ENCODE measurements at regions of chr12 and their contacts with region 1.

Region 1: DNA sequence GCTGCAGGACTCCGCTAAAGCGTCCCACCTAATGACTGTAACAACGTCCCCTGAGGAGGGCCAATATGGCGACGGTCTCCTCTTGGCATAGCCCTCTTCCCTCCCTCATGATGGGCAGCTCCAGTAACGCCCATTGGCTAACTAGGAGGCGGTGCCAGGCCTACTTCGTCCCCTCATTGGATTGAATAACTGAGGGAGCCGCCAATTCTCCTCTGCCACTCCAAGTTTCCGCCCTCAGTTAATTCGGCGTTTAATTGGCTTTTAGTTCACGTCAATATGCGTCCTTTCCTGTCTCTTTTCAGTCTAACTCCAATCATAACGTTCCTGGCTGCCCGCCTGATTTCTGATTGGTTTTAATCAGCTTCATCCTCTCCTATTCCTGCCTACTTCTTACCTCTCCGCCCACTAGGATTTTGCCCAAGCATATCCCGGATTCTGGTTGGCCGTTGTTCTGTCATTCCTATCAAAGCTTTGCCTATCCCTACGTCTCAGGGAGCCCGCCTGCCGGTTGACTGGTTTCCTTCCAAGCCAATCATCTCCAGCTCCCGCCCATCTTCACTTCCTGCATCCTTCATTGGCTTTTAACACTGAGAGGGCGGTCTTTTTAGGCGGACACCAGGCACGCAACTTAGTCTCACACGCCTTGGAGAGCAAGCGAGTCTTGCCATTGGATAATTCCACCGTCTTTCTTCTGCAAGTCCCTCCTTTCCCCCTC is 430 bp upstream of the SP1 start:
- DNase-seq: peak in 4 of 5 donors; percentile 83 to 100 (median 99)
- H3K4me3 ChIP-seq: peak overlapping the region; percentile 63
- H3K4me3 Mint-ChIP-seq: no peak overlapping the region
- H3K27ac ChIP-seq: peak overlapping the region; percentile 73
- H3K27ac Mint-ChIP-seq: no peak overlapping the region
- H3K4me1 ChIP-seq: peaks cover 42% of the 10 kb centered on the region
- H3K4me1 Mint-ChIP-seq: peaks cover 30 to 37% (median 36%) of the 10 kb centered on the region in 3 donors
- H3K27me3 ChIP-seq: no peaks in the 10 kb centered on the region
- H3K27me3 Mint-ChIP-seq: no peaks in the 10 kb centered on the region

Region 2: DNA sequence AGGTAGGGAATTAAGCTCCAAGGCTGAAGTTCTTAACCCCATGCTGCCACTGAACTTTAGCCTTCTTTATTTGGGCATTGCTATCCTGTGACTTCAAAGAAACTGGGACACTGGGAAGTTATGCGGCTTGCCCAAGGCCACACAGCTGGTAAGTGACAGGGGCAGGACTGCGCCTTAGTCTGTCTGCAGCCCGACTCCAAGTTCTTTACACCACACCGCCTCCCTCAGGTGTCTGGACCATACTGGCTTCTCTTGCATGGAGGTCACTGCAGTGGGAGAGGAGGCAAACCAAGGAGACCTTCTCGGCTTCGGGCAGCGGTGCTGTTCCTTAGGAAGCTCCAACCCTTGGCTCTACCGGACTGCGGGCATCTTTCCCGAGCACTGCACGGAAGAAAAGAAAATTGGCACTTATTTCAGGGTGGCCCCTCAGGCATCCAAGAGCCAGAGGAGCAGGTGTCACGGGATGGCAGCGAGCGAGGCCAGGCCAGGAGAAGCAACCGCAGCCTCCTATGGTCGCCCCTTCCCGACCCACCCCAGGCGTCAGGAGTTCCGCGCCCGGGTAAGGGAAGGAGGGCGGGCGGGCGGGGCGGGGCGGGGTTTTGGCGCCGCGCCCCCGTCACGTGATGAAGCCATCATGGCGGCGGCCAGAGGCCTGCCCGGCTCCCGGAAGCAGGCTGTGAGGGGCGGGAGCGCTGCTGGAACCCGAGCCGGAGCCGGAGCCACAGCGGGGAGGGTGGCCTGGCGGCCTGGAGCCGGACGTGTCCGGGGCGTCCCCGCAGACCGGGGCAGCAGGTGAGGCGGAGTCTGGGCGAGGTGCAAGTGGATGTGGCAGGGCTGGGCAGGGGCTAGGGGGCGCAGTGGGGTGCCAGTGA is 127.8 kb before region 1 on chr12:
- CTCF ChIA-PET with region 1: no interaction called
- POLR2A ChIA-PET with region 1: interaction called, 14 read pairs
- DNase-seq: peak; percentile 68 to 84 (median 69)
- H3K4me3 ChIP-seq: peak overlapping the region; percentile 83
- H3K4me3 Mint-ChIP-seq: peak overlapping the region; percentile 97 to 99 (median 99)
- H3K27ac ChIP-seq: peak overlapping the region; percentile 73
- H3K27ac Mint-ChIP-seq: peak overlapping the region; percentile 90 to 100 (median 98)
- H3K4me1 ChIP-seq: peaks cover 41% of the 10 kb centered on the region
- H3K4me1 Mint-ChIP-seq: peaks cover 32 to 46% (median 46%) of the 10 kb centered on the region in 3 donors
- H3K27me3 ChIP-seq: no peaks in the 10 kb centered on the region
- H3K27me3 Mint-ChIP-seq: peaks cover 0 to 1% of the 10 kb centered on the region in 2 donors

Region 3: DNA sequence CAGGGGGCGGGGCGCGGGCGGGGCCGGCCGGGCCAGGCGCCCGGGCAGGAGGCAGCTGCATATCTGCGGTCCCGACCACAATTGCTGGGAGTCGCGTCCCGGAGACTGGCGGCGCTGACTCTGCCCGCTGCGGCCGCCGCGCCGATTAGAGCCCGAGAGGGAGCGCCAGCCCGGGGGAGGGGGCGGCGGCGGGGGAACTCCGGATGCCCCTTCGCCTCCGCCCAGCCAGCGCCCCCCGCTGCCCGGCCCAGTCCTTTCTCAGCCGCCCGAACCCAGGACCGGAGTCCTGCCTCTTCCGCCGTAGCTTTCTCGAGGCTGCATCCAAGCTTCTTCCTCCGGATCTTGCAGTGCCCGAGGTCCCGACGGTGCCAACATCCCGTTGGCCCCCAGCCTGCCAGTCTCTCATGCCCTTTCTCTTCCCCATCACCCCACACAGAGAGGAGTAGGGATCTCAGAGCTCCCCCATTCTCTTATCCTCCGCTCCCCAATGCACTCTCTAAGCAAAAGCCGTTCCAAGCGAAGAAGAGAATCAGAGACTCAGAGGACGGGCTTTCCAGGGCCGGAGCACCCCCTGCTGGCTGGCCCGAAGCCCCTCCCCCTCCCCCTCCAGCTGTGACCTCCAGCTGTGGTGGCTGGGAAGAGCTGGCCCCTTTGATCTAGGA is 34.6 kb before region 1 on chr12:
- CTCF ChIA-PET with region 1: interaction called, 21 read pairs
- POLR2A ChIA-PET with region 1: interaction called, 8 read pairs
- DNase-seq: peak; percentile 53 to 80 (median 61)
- H3K4me3 ChIP-seq: peak overlapping the region; percentile 80
- H3K4me3 Mint-ChIP-seq: peak overlapping the region; percentile 90 to 98 (median 95)
- H3K27ac ChIP-seq: peak overlapping the region; percentile 4
- H3K27ac Mint-ChIP-seq: peak overlapping the region in 7 of 8 donors; percentile 75 to 95 (median 92)
- H3K4me1 ChIP-seq: peaks cover 9% of the 10 kb centered on the region
- H3K4me1 Mint-ChIP-seq: peaks cover 12 to 18% (median 14%) of the 10 kb centered on the region in 3 donors
- H3K27me3 ChIP-seq: no peaks in the 10 kb centered on the region
- H3K27me3 Mint-ChIP-seq: peaks cover 6 to 7% of the 10 kb centered on the region in 2 donors

Region 4: DNA sequence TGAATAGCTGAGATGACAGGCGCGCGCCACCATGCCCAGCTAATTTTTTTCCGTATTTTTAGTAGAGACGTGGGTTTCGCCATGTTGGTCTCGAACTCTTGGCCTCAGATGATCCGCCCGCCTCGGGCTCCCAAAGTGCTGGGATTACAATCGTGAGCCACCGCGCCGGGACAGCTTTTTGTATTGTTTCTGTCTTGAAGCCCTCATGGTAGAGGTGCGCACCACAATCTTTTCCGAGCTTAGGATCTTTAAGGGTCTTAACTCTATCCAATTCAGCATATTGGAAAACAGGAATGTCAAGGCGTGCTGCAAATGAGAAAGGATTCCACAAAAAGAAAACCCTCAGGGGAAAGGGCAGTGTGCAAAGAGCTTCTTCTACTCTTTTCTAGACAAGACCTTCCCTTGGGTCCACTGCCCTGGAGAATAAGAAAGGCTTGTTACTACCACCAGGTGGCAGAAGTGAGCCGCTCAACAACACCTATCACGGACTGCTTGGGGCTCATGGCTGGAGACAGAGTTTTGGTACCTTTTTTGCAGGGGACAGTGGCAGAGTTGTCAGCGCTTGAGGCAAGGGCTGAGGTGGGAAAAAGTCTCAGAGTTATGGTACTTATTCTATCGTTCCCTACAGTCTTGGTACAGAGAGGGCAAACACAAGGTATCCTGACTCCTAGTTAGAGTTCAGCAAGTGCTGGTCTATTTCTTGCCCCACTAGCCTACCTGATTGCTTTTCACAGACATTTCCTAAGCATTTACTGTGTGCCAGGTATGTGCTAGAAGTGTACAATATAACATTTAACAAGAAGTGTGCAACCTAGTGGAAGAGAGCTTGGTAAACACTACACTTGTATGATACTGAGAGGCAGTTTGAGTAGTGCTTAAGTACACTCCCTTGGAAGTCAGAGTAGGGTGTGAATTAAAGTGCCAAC is 27.0 kb before region 1 on chr12:
- CTCF ChIA-PET with region 1: interaction called, 29 read pairs
- POLR2A ChIA-PET with region 1: interaction called, 3 read pairs
- DNase-seq: peak; percentile 71 to 89 (median 78)
- H3K4me3 ChIP-seq: no peak overlapping the region
- H3K4me3 Mint-ChIP-seq: no peak overlapping the region
- H3K27ac ChIP-seq: no peak overlapping the region
- H3K27ac Mint-ChIP-seq: peak overlapping the region in 3 of 8 donors; percentile 2 to 38 (median 12)
- H3K4me1 ChIP-seq: peaks cover 6% of the 10 kb centered on the region
- H3K4me1 Mint-ChIP-seq: peaks cover 6 to 7% (median 6%) of the 10 kb centered on the region in 3 donors
- H3K27me3 ChIP-seq: no peaks in the 10 kb centered on the region
- H3K27me3 Mint-ChIP-seq: no peaks in the 10 kb centered on the region

Region 5: DNA sequence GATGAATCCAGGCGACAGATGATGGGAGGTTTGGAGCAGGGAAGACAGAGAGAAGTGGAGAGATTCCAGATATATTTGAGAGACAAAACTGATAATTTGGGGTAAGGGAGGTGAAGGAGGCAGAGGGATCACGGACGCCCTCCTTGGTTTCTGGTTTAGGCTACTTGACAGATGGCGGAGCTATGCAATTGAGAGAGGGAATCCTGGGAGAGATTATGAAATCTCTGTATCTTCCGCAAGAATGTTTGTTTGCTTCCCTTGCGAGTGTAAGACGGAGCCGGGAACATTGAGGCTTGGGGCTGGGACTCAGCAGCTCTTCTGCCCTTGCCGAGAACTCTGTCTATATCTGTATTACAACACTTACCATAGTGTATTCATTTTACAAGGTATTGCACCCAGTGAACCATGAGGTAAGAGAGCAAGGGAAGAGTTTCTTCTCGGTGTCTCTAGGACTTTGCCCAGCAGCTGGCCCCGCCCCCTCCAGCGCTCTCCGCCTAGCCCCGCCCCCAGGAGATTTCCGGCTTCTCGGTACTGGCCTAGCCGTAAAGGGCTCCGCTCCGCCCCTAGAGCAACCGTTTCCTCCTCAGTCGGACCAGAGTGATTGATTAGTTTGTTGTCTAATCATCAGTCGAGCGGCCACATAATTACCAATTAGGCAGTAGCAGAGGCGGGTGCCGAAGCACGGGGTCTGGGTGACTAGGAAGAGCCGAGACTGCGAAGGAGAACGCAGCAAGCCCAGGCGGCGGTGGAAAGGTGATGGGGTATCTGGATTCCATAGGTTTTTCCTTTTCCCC is 61.7 kb after region 1 on chr12 and contains the start of gene PRR13:
- CTCF ChIA-PET with region 1: no interaction called
- POLR2A ChIA-PET with region 1: interaction called, 12 read pairs
- DNase-seq: peak; percentile 95 to 99 (median 98)
- H3K4me3 ChIP-seq: peak within 1 kb of the TSS; percentile 89
- H3K4me3 Mint-ChIP-seq: peak within 1 kb of the TSS; percentile 94 to 98 (median 97)
- H3K27ac ChIP-seq: peak within 1 kb of the TSS; percentile 91
- H3K27ac Mint-ChIP-seq: peak within 1 kb of the TSS; percentile 86 to 98 (median 96)
- H3K4me1 ChIP-seq: peaks cover 43% of the 10 kb centered on the region
- H3K4me1 Mint-ChIP-seq: peaks cover 37 to 48% (median 47%) of the 10 kb centered on the region in 3 donors
- H3K27me3 ChIP-seq: no peaks in the 10 kb centered on the region
- H3K27me3 Mint-ChIP-seq: no peaks in the 10 kb centered on the region
- total RNA-seq, gene PRR13: 234 to 236 TPM

Region 6: GRCh38 chr12:53500776-53501614 is 121.4 kb after region 1 on chr12 and contains the start of gene TARBP2:
- CTCF ChIA-PET with region 1: interaction called, 3 read pairs
- POLR2A ChIA-PET with region 1: interaction called, 31 read pairs
- DNase-seq: peak; percentile 95 to 99 (median 98)
- H3K4me3 ChIP-seq: peak within 1 kb of the TSS; percentile 66
- H3K4me3 Mint-ChIP-seq: peak within 1 kb of the TSS; percentile 78 to 96 (median 91)
- H3K27ac ChIP-seq: peak within 1 kb of the TSS; percentile 94
- H3K27ac Mint-ChIP-seq: peak within 1 kb of the TSS; percentile 91 to 100 (median 96)
- H3K4me1 ChIP-seq: peaks cover 31% of the 10 kb centered on the region
- H3K4me1 Mint-ChIP-seq: peaks cover 28 to 56% (median 43%) of the 10 kb centered on the region in 3 donors
- H3K27me3 ChIP-seq: no peaks in the 10 kb centered on the region
- H3K27me3 Mint-ChIP-seq: no peaks in the 10 kb centered on the region
- total RNA-seq, gene TARBP2: 62.1 to 65.1 TPM